B cell (primary cell): ENCODE measurements at regions of chr6 and their contacts with region 1.

Region 1: GRCh38 chr6:110815217-110816109 is at the start of gene CDK19:
- DNase-seq: peak; percentile 99
- ATAC-seq: peak; percentile 76
- H3K4me3 ChIP-seq: peak within 1 kb of the TSS; percentile 83 to 99 (median 93)
- H3K4me3 Mint-ChIP-seq: peak within 1 kb of the TSS; percentile 97
- H3K27ac ChIP-seq: peak within 1 kb of the TSS; percentile 84 to 93
- H3K27ac Mint-ChIP-seq: peak within 1 kb of the TSS; percentile 99
- H3K4me1 ChIP-seq: peaks cover 33 to 34% of the 10 kb centered on the region in 2 donors
- H3K4me1 Mint-ChIP-seq: peaks cover 39% of the 10 kb centered on the region
- H3K27me3 ChIP-seq: no peaks in the 10 kb centered on the region
- H3K27me3 Mint-ChIP-seq: no peaks in the 10 kb centered on the region
- CTCF ChIP-seq: no peak
- total RNA-seq, gene CDK19: 44.8 and 45.3 TPM in 2 replicates

Region 2: DNA sequence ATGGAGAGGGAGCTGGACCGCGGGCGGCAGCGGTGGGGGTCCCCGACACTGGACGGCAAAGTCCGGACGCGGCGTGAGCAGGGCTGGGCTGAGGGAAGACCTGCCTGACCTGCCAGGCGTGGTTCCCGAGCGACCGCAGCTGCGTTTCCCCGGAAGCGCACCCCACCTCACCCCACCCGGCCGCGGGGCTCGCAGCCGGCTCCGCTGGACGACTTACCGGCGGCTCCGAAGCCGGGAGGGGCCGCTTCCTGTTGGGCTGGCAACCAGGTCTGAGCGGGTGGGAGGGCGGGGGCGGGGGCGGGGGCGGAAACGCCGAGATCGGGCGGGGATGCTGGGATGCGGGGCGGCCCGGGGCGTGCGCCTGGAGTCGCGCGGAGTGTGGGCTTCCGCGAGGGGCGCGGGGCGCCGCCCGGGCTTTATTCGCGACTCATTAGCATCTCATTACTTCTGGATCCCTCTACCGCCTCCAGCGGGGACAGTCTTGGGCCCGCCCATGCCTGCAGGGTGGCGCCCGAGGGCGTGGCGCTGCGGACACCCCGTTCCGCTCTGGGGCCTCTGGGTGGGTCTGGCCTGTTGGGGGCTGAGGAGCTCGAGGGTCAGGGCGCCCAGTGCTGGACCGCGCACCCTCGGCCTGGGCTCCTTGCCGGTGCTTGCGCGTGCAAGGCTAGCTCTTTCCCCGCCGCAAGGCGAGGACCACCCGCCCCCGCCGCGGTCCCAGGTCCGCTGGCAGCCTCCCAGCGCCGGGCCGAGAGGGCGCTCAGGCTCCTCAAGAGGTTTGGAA is 1359.8 kb before region 1 on chr6 and contains the start of gene MICAL1:
- CTCF ChIA-PET with region 1: no interaction called
- POLR2A ChIA-PET with region 1: no interaction called
- intact Hi-C with region 1: loop called (anchors 5 kb)
- DNase-seq: peak; percentile 94
- ATAC-seq: peak; percentile 61
- H3K4me3 ChIP-seq: peak within 1 kb of the TSS; percentile 73 to 99 (median 93)
- H3K4me3 Mint-ChIP-seq: peak within 1 kb of the TSS; percentile 95
- H3K27ac ChIP-seq: peak within 1 kb of the TSS; percentile 98 to 99
- H3K27ac Mint-ChIP-seq: peak within 1 kb of the TSS; percentile 99
- H3K4me1 ChIP-seq: peaks cover 82 to 83% of the 10 kb centered on the region in 2 donors
- H3K4me1 Mint-ChIP-seq: peaks cover 82% of the 10 kb centered on the region
- H3K27me3 ChIP-seq: no peaks in the 10 kb centered on the region
- H3K27me3 Mint-ChIP-seq: no peaks in the 10 kb centered on the region
- CTCF ChIP-seq: peak; percentile 53
- total RNA-seq, gene MICAL1: 202 TPM in 2 replicates

Region 3: DNA sequence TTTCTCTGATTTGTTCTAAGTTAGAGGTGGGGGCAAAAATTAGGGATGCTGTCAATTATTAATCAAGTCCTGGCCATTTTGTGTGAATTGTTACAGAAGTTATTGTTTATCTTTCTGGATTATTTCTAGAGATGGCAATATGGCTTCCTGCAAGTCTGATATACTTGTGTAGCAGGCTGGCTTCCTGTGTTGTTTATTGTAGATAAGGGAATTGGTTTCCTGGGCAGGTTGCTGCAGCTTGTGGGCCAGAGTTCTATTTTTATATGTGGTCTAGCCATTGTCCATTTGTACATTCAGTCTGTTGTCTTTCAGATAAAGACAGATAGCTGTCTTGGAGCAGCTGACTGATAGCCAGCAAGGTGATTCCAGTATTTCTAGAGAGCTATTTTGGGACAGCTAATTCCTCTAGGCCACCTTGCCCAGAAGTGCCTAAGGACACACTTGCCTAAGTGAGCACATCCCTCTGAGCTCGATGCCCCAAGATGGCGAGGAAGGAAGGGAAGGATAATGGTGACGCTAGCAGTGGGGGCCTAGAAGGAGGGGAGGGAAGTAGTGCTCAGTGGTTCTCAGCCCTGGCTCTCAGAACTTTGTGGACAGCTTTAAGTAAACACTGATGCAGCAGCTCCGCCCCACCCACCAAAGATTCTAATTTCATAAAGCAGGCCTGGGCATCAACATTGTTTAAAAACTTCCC is 425.6 kb before region 1 on chr6:
- CTCF ChIA-PET with region 1: no interaction called
- POLR2A ChIA-PET with region 1: no interaction called
- intact Hi-C with region 1: no loop called
- DNase-seq: no peak
- ATAC-seq: no peak
- H3K4me3 ChIP-seq: no peak overlapping the region
- H3K4me3 Mint-ChIP-seq: no peak overlapping the region
- H3K27ac ChIP-seq: no peak overlapping the region
- H3K27ac Mint-ChIP-seq: no peak overlapping the region
- H3K4me1 ChIP-seq: no peaks in the 10 kb centered on the region
- H3K4me1 Mint-ChIP-seq: no peaks in the 10 kb centered on the region
- H3K27me3 ChIP-seq: no peaks in the 10 kb centered on the region
- H3K27me3 Mint-ChIP-seq: no peaks in the 10 kb centered on the region
- CTCF ChIP-seq: no peak

Region 4: GRCh38 chr6:110769923-110770322 is 45.5 kb before region 1 on chr6:
- CTCF ChIA-PET with region 1: interaction called, 3 read pairs
- POLR2A ChIA-PET with region 1: no interaction called
- intact Hi-C with region 1: loop called (anchors 5 kb)
- DNase-seq: peak; percentile 41
- ATAC-seq: peak; percentile 36
- H3K4me3 ChIP-seq: no peak overlapping the region
- H3K4me3 Mint-ChIP-seq: no peak overlapping the region
- H3K27ac ChIP-seq: peak overlapping the region in 1 of 2 donors; percentile 61
- H3K27ac Mint-ChIP-seq: peak overlapping the region; percentile 10
- H3K4me1 ChIP-seq: peaks cover 7 to 9% of the 10 kb centered on the region in 2 donors
- H3K4me1 Mint-ChIP-seq: peaks cover 14% of the 10 kb centered on the region
- H3K27me3 ChIP-seq: no peaks in the 10 kb centered on the region
- H3K27me3 Mint-ChIP-seq: no peaks in the 10 kb centered on the region
- CTCF ChIP-seq: no peak

Region 5: GRCh38 chr6:110859335-110859792 is 43.9 kb after region 1 on chr6:
- CTCF ChIA-PET with region 1: no interaction called
- POLR2A ChIA-PET with region 1: interaction called, 15 read pairs
- intact Hi-C with region 1: no loop called
- DNase-seq: peak; percentile 51
- ATAC-seq: peak; percentile 60
- H3K4me3 ChIP-seq: peak overlapping the region; percentile 29 to 51 (median 41)
- H3K4me3 Mint-ChIP-seq: peak overlapping the region; percentile 40
- H3K27ac ChIP-seq: peak overlapping the region; percentile 4 to 58
- H3K27ac Mint-ChIP-seq: peak overlapping the region; percentile 80
- H3K4me1 ChIP-seq: peaks cover 11 to 14% of the 10 kb centered on the region in 2 donors
- H3K4me1 Mint-ChIP-seq: peaks cover 12% of the 10 kb centered on the region
- H3K27me3 ChIP-seq: no peaks in the 10 kb centered on the region
- H3K27me3 Mint-ChIP-seq: no peaks in the 10 kb centered on the region
- CTCF ChIP-seq: no peak

Region 6: DNA sequence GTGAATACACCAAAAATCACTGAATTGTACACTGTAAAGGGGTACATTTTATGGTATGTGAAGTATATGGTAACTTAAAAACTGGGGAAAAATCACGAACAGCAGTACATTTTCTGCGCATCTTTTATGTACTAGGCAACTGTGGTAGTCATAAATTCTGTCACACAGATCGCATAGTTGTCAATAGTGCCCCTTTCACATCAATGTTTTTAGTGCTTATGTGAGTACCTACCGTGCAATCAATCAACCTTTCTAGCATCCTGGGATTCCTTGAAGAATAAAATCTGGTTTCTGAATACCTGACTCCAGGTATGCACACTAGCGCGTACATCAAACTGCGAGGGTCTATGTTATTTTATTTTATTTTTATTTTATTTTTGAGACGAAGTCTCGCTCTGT is 165.7 kb after region 1 on chr6:
- CTCF ChIA-PET with region 1: no interaction called
- POLR2A ChIA-PET with region 1: interaction called, 4 read pairs
- intact Hi-C with region 1: loop called (anchors 1 kb)
- DNase-seq: peak; percentile 43
- ATAC-seq: no peak
- H3K4me3 ChIP-seq: peak overlapping the region; percentile 73 to 98 (median 87)
- H3K4me3 Mint-ChIP-seq: peak overlapping the region; percentile 98
- H3K27ac ChIP-seq: peak overlapping the region; percentile 77 to 93
- H3K27ac Mint-ChIP-seq: peak overlapping the region; percentile 99
- H3K4me1 ChIP-seq: peaks cover 13 to 18% of the 10 kb centered on the region in 2 donors
- H3K4me1 Mint-ChIP-seq: peaks cover 34% of the 10 kb centered on the region
- H3K27me3 ChIP-seq: no peaks in the 10 kb centered on the region
- H3K27me3 Mint-ChIP-seq: no peaks in the 10 kb centered on the region
- CTCF ChIP-seq: no peak